HEK293 (cell line): ENCODE measurements at regions of chr17 and their contacts with region 1.

Region 1: GRCh38 chr17:49612721-49613120 is 37.0 kb downstream of the NXPH3 start:
- H3K4me3 ChIP-seq: no peak overlapping the region
- H3K27ac ChIP-seq: no peak overlapping the region
- H3K4me1 ChIP-seq: no peaks in the 10 kb centered on the region
- CTCF ChIP-seq: no peak

Region 2: DNA sequence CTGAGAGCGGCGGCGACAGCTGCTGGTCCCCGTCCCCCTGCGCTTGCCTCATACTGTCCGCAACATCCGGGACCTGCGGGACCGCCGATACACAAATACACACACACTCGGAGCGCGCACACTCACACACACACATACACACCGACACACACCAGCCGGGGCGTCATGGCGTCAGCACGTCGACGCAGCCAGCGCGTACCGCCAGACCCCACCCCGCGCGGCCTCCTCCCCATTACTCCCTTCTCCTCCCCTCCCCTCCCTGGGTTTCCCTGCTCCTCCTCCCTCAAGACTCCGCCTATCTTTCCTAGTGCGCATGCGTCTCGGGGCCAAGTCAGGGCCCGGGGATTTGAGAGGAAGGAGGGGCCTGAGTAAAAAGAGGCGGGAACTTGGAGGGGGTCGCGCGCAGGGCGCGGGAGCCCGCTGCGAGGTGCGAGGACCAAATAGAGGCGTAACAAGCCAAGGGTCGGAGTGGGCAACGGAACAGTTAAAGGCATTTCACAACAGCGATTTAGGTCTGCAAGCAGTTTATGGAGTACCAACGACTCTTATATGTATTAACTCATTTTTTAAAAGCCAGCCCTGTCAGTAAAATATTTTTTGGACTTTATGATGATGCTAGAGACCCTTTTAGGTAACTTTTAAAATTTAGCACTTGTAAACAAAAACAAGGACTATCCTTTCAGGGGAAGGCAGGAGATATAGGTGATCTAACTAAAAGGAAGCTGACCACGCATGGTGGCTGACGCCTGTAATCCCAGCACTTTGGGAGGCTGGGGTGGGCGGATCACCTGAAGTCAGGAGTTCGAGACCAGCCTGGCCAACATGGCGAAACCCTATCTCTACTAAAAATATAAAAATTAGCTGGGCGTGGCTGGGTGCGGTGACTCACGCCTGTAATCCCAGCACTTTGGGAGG is 65.5 kb after region 1 on chr17 and contains the start of gene SPOP:
- CTCF ChIA-PET with region 1: no interaction called
- POLR2A ChIA-PET with region 1: interaction called, 11 read pairs
- H3K4me3 ChIP-seq: peak within 1 kb of the TSS; percentile 78
- H3K27ac ChIP-seq: peak within 1 kb of the TSS; percentile 70
- H3K4me1 ChIP-seq: peaks cover 15% of the 10 kb centered on the region; the same call in 1 of the 2 replicates
- CTCF ChIP-seq: no peak